SK-N-SH (cell line): ENCODE measurements at regions of chr20 and their contacts with region 1.

Region 1: GRCh38 chr20:48657475-48658470 is 170.0 kb downstream of the PREX1 start:
- DNase-seq: peak; percentile 92
- H3K4me3 ChIP-seq: no peak overlapping the region; a peak in 1 of 4 replicates
- H3K27ac ChIP-seq: no peak overlapping the region
- H3K4me1 ChIP-seq: no peaks in the 10 kb centered on the region
- H3K27me3 ChIP-seq: no peaks in the 10 kb centered on the region
- CTCF ChIP-seq: peak; percentile 94
- EP300 ChIP-seq: no peak
- RAD21 ChIP-seq: peak; percentile 99

Region 2: GRCh38 chr20:48635433-48636310 is 22.1 kb before region 1 on chr20:
- CTCF ChIA-PET with region 1: interaction called, 49 read pairs
- POLR2A ChIA-PET with region 1: no interaction called
- DNase-seq: peak; percentile 90
- H3K4me3 ChIP-seq: no peak overlapping the region
- H3K27ac ChIP-seq: no peak overlapping the region
- H3K4me1 ChIP-seq: peaks cover 0 to 20% of the 10 kb centered on the region in 2 experiments; a peak in 1 of 4 replicates
- H3K27me3 ChIP-seq: no peaks in the 10 kb centered on the region
- CTCF ChIP-seq: peak; percentile 90
- EP300 ChIP-seq: no peak
- RAD21 ChIP-seq: peak; percentile 90

Region 3: DNA sequence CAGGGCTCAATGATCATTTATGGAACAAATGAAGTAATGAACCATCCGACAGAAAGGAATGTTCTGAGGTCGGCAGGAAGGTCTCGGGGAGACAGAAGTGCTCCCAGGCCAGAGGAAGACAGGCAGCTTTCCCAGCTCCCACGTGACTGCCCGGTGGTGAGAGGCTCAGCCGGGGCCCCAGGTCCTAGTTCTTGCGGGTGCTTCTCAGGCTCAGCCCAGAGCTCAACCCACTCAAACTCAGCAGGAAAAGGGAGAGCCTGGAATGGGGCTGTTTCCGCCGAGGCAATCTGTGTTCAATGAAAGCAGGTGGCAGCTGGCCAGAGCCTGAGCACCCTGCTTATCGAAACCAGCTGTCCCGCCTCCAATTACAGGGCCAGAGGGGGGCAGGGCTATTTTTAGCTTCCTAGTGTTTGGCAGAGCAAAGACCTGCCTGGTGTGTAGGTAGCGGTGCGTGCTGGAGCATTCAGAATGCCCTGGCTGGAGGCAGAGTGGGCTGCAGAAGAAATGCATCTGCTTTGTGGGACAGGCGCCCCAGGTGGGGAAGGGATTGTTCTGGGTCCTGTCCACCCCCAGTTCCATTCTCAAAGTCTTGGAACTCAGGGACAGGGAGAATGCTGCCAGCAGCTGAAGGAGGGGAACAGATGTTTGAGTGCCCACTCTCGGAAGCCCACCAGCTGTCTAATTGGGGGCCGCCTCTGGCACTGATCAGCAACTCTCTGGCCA is 24.9 kb after region 1 on chr20:
- CTCF ChIA-PET with region 1: interaction called, 32 read pairs
- POLR2A ChIA-PET with region 1: no interaction called
- DNase-seq: peak; percentile 93
- H3K4me3 ChIP-seq: peak overlapping the region; percentile 25 to 46; a peak in 3 of 4 replicates
- H3K27ac ChIP-seq: peak overlapping the region; percentile 85 to 97
- H3K4me1 ChIP-seq: peaks cover 52 to 64% of the 10 kb centered on the region in 2 experiments
- H3K27me3 ChIP-seq: no peaks in the 10 kb centered on the region
- CTCF ChIP-seq: no peak
- EP300 ChIP-seq: peak; percentile 86 to 89
- RAD21 ChIP-seq: peak; percentile 37; the same call in 1 of the 2 replicates

Region 4: GRCh38 chr20:48750947-48751635 is 93.3 kb after region 1 on chr20:
- CTCF ChIA-PET with region 1: interaction called, 11 read pairs
- POLR2A ChIA-PET with region 1: no interaction called
- DNase-seq: peak; percentile 28
- H3K4me3 ChIP-seq: no peak overlapping the region
- H3K27ac ChIP-seq: no peak overlapping the region
- H3K4me1 ChIP-seq: no peaks in the 10 kb centered on the region; a peak in 1 of 4 replicates
- H3K27me3 ChIP-seq: no peaks in the 10 kb centered on the region
- CTCF ChIP-seq: no peak
- EP300 ChIP-seq: no peak
- RAD21 ChIP-seq: no peak

Region 5: GRCh38 chr20:48828022-48828743 is 170.4 kb after region 1 on chr20:
- CTCF ChIA-PET with region 1: interaction called, 50 read pairs
- POLR2A ChIA-PET with region 1: interaction called, 3 read pairs
- DNase-seq: peak; percentile 99
- H3K4me3 ChIP-seq: peak overlapping the region; percentile 64 to 66
- H3K27ac ChIP-seq: peak overlapping the region in 1 of 2 experiments; percentile 68; a peak in 1 of 4 replicates
- H3K4me1 ChIP-seq: peaks cover 5 to 40% of the 10 kb centered on the region in 2 experiments; a peak in 3 of 4 replicates
- H3K27me3 ChIP-seq: no peaks in the 10 kb centered on the region
- CTCF ChIP-seq: no peak
- EP300 ChIP-seq: no peak
- RAD21 ChIP-seq: no peak

Region 6: DNA sequence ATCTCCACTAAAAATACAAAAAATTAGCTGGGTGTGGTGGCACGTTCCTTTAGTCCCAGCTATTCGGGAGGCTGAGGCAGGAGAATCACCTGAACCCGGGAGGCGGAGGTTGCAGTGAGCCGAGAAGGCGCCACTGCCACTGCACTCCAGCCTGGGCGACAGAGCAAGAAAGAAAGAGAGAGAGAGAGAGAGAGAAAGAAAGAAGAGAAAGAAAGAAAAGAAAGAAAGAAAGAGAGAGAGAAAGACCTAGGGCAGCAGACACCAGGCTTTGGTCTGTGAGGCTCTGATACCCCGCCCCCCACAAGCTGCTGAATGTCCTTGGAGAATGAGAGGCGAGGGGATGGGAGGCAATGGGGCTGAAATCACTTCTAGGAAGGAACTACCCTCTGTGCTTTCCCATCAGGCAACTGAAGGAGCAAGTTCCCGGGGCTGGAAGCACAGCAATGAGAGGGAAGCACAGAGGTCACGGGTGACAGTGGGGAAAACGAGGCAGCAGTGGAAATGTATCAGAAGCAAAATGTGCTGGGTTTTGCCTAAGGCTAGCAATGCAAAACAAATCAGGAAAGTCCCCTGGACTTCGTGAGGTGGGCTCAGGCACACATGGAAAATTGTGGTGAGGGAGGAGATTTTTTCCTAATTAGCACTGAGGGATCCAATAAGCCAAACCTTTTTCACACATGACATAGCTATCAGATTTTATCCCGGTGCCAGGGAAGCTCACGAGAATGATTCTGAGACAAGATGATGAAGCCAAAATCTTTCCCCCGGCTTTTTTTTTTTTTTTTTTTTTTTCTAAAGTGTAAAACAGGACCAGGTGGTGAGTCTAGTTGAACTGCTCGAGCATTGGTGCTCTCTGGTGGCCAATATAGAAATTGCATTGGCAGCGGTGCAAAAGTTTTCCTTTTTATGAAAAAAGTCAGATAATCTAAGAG is 246.9 kb after region 1 on chr20:
- CTCF ChIA-PET with region 1: interaction called, 245 read pairs
- POLR2A ChIA-PET with region 1: interaction called, 3 read pairs
- DNase-seq: peak; percentile 68
- H3K4me3 ChIP-seq: no peak overlapping the region
- H3K27ac ChIP-seq: no peak overlapping the region
- H3K4me1 ChIP-seq: peaks cover 0 to 4% of the 10 kb centered on the region in 2 experiments; a peak in 2 of 4 replicates
- H3K27me3 ChIP-seq: no peaks in the 10 kb centered on the region
- CTCF ChIP-seq: peak; percentile 92
- EP300 ChIP-seq: no peak
- RAD21 ChIP-seq: peak; percentile 95